ENCODE measurements at regions of chr2 and their contacts with region 1.

Region 1: DNA sequence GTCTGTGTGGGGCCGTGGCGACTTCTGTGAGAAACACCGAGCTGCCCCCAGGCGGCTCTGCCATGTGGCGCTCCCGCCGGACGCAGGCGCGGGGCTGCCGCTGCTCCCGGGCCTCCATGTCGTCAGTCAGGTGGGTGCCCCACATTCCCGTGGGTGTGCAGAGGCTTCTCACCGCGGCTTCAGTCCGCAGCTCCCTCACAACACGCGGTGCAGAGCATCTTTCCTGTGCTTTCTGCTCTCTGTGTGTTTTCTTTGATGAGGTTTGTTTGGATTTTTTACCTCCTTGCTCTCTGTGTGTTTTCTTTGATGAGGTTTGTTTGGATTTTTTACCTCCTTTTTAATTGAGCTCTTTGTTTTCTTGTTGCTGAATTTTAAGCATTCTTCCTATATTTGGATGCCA is 13.0 kb downstream of the AQP12A start:
- DNase-seq: no peak
- ATAC-seq: no peak
- H3K4me3 ChIP-seq: no peak overlapping the region
- H3K27ac ChIP-seq: no peak overlapping the region
- H3K4me1 ChIP-seq: no peaks in the 10 kb centered on the region
- H3K27me3 ChIP-seq: peaks cover 5 to 54% of the 10 kb centered on the region in 2 experiments; a peak in 4 of 5 replicates
- CTCF ChIP-seq: no peak
- EP300 ChIP-seq: no peak
- POLR2A ChIP-seq: no peak
- RAD21 ChIP-seq: no peak

Region 2: DNA sequence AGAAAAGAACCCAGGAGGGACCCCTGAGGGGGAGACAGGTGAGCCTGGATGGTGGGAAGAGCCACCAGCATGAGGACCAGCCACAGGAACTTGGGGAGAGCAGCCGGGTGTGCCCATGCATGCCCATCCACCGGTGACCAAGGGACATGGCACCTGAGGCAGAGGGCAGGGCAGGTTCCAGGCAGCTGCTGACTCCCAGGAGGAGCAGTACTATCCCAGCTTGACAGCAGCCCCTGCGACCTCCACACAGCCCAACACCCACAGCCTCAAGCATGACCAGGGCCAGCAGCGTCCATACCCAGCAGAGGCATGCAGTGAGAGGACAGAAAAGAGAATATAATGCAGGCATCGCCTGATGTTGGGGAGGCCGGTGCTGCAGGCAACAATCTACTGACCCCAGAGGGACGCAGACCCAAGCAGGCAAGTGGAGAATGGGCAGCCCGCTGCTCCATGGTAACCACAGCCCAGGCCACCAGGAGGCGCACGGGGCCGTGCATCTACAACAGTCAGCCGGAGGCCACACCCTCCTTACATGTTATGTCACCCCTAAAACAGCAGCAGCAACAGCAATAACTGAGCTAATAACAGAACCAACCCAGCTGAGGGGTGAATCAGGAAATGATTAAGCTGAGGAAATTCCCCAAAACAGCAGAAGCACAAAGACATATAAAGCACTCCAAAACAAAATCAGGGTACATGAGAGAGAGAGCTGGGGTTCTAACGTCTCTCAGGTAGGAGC is 190.9 kb before region 1 on chr2:
- CTCF ChIA-PET with region 1: no interaction called
- POLR2A ChIA-PET with region 1: no interaction called
- in situ Hi-C with region 1: no loop called
- intact Hi-C with region 1: loop called (anchors 10 kb)
- DNase-seq: peak; percentile 79 to 82 (median 80)
- ATAC-seq: peak; percentile 100
- H3K4me3 ChIP-seq: no peak overlapping the region
- H3K27ac ChIP-seq: no peak overlapping the region
- H3K4me1 ChIP-seq: peaks cover 2 to 9% of the 10 kb centered on the region in 2 experiments; a peak in 2 of 5 replicates
- H3K27me3 ChIP-seq: no peaks in the 10 kb centered on the region
- CTCF ChIP-seq: peak; percentile 83 to 89 (median 83)
- EP300 ChIP-seq: no peak
- POLR2A ChIP-seq: no peak
- RAD21 ChIP-seq: peak; percentile 73 to 85